SK-N-SH (cell line): ENCODE measurements at regions of chr14 and their contacts with region 1.

Region 1: GRCh38 chr14:76918751-76919543 is 92.7 kb downstream of the LRRC74A start:
- DNase-seq: peak; percentile 74
- H3K4me3 ChIP-seq: peak overlapping the region; percentile 15 to 47; a peak in 3 of 4 replicates
- H3K27ac ChIP-seq: peak overlapping the region; percentile 100
- H3K4me1 ChIP-seq: peaks cover 67 to 73% of the 10 kb centered on the region in 2 experiments
- H3K27me3 ChIP-seq: no peaks in the 10 kb centered on the region
- CTCF ChIP-seq: peak; percentile 22
- EP300 ChIP-seq: peak; percentile 62 to 90; a peak in 3 of 4 replicates
- RAD21 ChIP-seq: peak; percentile 41

Region 2: GRCh38 chr14:76882651-76883050 is 36.3 kb before region 1 on chr14:
- CTCF ChIA-PET with region 1: interaction called, 102 read pairs
- POLR2A ChIA-PET with region 1: no interaction called
- DNase-seq: peak; percentile 59
- H3K4me3 ChIP-seq: no peak overlapping the region
- H3K27ac ChIP-seq: peak overlapping the region in 1 of 2 experiments; percentile 72; a peak in 1 of 4 replicates
- H3K4me1 ChIP-seq: peaks cover 0 to 24% of the 10 kb centered on the region in 2 experiments; a peak in 1 of 4 replicates
- H3K27me3 ChIP-seq: no peaks in the 10 kb centered on the region
- CTCF ChIP-seq: no peak
- EP300 ChIP-seq: no peak
- RAD21 ChIP-seq: peak; percentile 48

Region 3: GRCh38 chr14:76937181-76938091 is 18.5 kb after region 1 on chr14:
- CTCF ChIA-PET with region 1: interaction called, 133 read pairs
- POLR2A ChIA-PET with region 1: interaction called, 20 read pairs
- DNase-seq: peak; percentile 93
- H3K4me3 ChIP-seq: no peak overlapping the region
- H3K27ac ChIP-seq: peak overlapping the region; percentile 89 to 97
- H3K4me1 ChIP-seq: peaks cover 23 to 50% of the 10 kb centered on the region in 2 experiments
- H3K27me3 ChIP-seq: no peaks in the 10 kb centered on the region
- CTCF ChIP-seq: no peak
- EP300 ChIP-seq: no peak; a peak in 1 of 4 replicates
- RAD21 ChIP-seq: peak; percentile 35

Region 4: DNA sequence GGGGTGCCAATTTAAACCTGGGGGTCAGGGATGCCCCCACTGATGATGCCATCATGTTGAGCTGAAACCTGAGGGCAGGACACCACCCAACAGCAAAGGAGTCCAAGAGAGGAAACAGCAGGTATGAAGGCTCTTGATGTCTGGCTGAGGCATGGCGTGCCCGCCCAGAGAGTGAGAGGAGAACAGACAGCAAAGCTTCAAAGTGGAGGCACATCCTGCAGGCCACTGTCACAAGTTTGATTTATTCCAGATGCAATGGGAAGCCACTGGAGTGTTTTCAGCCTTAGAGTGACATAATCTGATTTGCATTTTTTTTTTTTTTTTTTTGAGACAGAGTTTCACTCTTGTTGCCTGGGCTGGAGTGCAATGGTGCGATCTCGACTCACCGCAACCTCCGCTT is 74.8 kb after region 1 on chr14:
- CTCF ChIA-PET with region 1: interaction called, 10 read pairs
- POLR2A ChIA-PET with region 1: no interaction called
- DNase-seq: peak; percentile 76
- H3K4me3 ChIP-seq: no peak overlapping the region
- H3K27ac ChIP-seq: peak overlapping the region in 1 of 2 experiments; percentile 58; a peak in 2 of 4 replicates
- H3K4me1 ChIP-seq: peaks cover 0 to 24% of the 10 kb centered on the region in 2 experiments; a peak in 1 of 4 replicates
- H3K27me3 ChIP-seq: no peaks in the 10 kb centered on the region
- CTCF ChIP-seq: no peak
- EP300 ChIP-seq: peak in 1 of 2 experiments; percentile 74; a peak in 2 of 4 replicates
- RAD21 ChIP-seq: peak; percentile 32; the same call in 1 of the 2 replicates

Region 5: DNA sequence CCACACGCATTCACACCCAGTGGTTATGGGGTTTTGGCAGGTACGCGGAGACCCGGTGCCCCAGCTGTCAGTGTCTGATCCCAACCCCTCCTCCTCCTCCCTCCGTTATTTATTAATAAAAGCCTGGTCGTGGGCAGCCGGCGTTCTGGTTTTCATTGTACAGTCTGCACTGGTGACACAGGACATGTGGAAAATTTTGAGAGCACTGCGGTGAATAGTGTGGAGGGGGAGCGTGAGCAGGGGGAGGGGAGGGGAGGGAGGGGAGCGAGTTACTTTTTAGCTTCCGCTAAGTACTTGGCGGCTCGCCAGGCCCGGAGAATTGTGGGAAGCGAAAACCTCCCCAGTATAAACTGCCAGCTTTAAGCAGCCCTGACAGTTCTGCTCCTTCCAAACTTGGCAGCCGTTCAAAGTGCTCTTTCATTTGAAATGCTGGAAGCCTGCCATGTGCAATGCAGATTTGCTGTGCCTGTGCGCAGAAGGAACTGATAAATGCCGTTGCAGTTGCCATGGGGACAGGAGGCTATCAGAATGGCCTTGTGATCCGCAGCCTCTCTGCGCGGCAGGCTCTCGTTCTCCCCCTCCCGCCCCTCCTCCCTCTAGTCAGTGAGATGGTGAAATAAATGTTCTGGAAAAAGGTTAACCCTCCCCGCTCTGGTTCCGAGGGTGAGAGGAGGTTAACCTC is 121.3 kb after region 1 on chr14:
- CTCF ChIA-PET with region 1: interaction called, 484 read pairs
- POLR2A ChIA-PET with region 1: interaction called, 10 read pairs
- DNase-seq: peak; percentile 86
- H3K4me3 ChIP-seq: peak overlapping the region; percentile 34 to 48
- H3K27ac ChIP-seq: peak overlapping the region; percentile 99 to 100
- H3K4me1 ChIP-seq: peaks cover 76 to 84% of the 10 kb centered on the region in 2 experiments
- H3K27me3 ChIP-seq: no peaks in the 10 kb centered on the region
- CTCF ChIP-seq: no peak
- EP300 ChIP-seq: peak; percentile 91
- RAD21 ChIP-seq: peak; percentile 25

Region 6: DNA sequence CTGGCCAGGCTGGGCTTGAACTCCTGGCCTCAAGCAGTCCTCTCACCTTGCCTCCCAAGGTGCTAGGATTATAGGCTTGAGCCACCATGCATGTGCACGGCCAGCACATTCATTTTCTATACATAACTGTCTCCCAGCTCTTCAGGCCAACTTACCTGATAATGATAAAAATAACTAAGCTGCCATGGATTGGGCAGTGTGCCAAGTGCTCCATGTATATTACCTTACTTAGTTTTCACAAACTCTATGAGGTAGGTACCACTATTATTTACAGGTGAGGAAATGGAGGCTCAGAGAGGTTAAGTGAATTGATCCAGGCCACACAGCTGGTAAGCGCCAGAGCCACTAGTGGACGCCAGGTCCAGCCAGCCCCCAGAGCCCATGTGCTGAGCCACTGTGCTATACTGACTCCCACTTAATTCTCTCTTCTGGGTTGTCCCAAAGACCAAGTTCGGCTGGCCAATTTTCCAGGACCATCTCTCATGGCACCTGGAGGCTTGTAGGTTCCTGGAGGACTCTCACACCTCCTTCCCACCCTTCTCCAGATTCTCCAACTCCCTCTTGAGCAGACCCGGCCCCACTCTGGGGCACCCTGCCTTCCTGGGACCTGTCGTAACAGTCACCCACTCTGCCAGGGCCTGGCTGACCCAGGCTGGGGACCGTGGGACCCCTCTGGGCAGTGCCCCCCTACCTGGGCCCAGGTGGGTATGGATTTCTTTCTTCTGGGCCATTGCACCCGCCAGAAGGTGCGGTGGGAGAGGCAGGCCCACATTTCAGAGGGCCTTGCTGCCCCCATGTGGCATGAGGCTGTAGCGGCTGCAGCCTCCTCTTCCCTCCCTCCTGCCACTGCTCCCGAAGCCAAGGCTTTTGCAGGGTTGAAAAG is 148.9 kb after region 1 on chr14:
- CTCF ChIA-PET with region 1: interaction called, 339 read pairs
- POLR2A ChIA-PET with region 1: interaction called, 3 read pairs
- DNase-seq: peak; percentile 84
- H3K4me3 ChIP-seq: no peak overlapping the region; a peak in 1 of 4 replicates
- H3K27ac ChIP-seq: no peak overlapping the region
- H3K4me1 ChIP-seq: peaks cover 0 to 14% of the 10 kb centered on the region in 2 experiments; a peak in 2 of 4 replicates
- H3K27me3 ChIP-seq: no peaks in the 10 kb centered on the region
- CTCF ChIP-seq: peak; percentile 92
- EP300 ChIP-seq: no peak
- RAD21 ChIP-seq: peak; percentile 95